Heart right ventricle (tissue), 16 donors: ENCODE measurements at regions of chr17 and their contacts with region 1.

Region 1: GRCh38 chr17:27396941-27397340 is 59.3 kb upstream of the KSR1 start:
- DNase-seq: no peak
- ATAC-seq: peak in 6 of 8 donors; percentile 44 to 61 (median 49)
- H3K4me3 ChIP-seq: no peak overlapping the region
- H3K27ac ChIP-seq: peak overlapping the region in 1 of 10 donors; percentile 1
- H3K4me1 ChIP-seq: peaks cover 0 to 24% (median 0%) of the 10 kb centered on the region in 9 donors
- H3K27me3 ChIP-seq: no peaks in the 10 kb centered on the region
- CTCF ChIP-seq: no peak

Region 2: GRCh38 chr17:27226615-27227230 is 170.2 kb before region 1 on chr17:
- intact Hi-C with region 1: loop called in 1 of 10 experiments (anchors 10 kb)
- DNase-seq: no peak
- ATAC-seq: no peak
- H3K4me3 ChIP-seq: no peak overlapping the region
- H3K27ac ChIP-seq: no peak overlapping the region
- H3K4me1 ChIP-seq: no peaks in the 10 kb centered on the region
- H3K27me3 ChIP-seq: peaks cover 0 to 10% (median 0%) of the 10 kb centered on the region in 7 donors
- CTCF ChIP-seq: no peak